K562 (cell line): ENCODE measurements at regions of chr7 and their contacts with region 1.

Region 1: GRCh38 chr7:8436965-8437364 is 3.6 kb downstream of the NXPH1 start:
- DNase-seq: peak; percentile 68 to 75 (median 72)
- ATAC-seq: peak; percentile 84
- H3K4me3 ChIP-seq: no peak overlapping the region
- H3K27ac ChIP-seq: no peak overlapping the region
- H3K4me1 ChIP-seq: peaks cover 0 to 21% of the 10 kb centered on the region in 2 experiments; a peak in 2 of 5 replicates
- H3K27me3 ChIP-seq: peaks cover 29 to 53% of the 10 kb centered on the region in 2 experiments
- CTCF ChIP-seq: peak; percentile 85 to 91 (median 88)
- EP300 ChIP-seq: no peak
- POLR2A ChIP-seq: no peak
- RAD21 ChIP-seq: peak; percentile 65 to 88

Region 2: DNA sequence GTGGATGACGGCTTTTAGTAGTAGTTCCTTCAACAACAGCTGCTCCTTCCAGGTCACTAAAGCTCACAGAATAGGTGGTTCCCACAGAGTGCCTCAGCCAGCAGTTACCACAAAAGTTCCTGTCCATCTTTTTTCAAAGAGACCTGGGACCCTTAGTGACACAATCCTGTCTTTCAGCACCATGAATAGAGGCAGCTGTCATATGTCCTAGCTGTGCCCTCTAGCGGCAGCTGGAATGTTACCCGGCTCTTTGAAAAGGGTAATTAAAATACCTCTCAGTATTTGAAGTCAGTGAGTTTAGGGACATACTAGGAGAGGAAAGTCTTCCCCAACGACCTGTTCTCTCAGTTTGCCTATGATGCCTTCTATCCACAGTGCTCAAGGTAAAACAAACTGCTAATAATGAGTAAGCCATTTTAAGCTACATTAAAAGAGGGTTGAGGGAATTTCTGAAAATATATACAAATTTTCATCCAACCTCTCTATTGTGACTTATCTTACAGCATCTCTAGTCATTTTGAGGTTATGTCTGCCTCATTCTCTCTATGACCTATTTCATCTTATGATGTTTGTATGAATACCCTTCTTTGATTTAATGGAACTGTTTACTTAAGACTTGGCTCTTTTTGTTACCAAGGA is 287.2 kb after region 1 on chr7:
- CTCF ChIA-PET with region 1: no interaction called
- POLR2A ChIA-PET with region 1: no interaction called
- in situ Hi-C with region 1: no loop called
- intact Hi-C with region 1: loop called (anchors 5 kb)
- DNase-seq: peak; percentile 26 to 74 (median 52)
- ATAC-seq: peak; percentile 99
- H3K4me3 ChIP-seq: no peak overlapping the region
- H3K27ac ChIP-seq: no peak overlapping the region
- H3K4me1 ChIP-seq: no peaks in the 10 kb centered on the region
- H3K27me3 ChIP-seq: no peaks in the 10 kb centered on the region; a peak in 1 of 5 replicates
- CTCF ChIP-seq: peak; percentile 76 to 79 (median 79)
- EP300 ChIP-seq: no peak
- POLR2A ChIP-seq: no peak
- RAD21 ChIP-seq: peak; percentile 49 to 70; a peak in 3 of 4 replicates

Region 3: DNA sequence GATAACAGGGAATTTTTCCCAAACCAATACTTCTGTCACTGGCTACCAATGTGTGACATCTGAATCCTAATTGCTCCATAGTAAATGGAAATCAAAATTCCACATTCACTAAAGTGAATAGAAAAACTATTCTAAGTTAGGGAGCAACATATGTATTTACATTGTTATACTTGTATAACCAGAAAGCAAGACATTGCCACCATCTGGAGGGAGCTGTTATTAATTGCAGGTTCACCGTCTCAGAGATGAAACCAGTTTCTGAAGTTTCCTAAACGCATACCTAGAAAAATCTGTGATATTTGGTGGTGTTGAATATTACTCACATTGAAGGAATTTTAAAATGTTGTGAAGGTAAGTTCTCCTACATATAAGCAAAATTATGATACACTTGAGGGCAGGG is 386.5 kb after region 1 on chr7:
- CTCF ChIA-PET with region 1: interaction called, 7 read pairs
- POLR2A ChIA-PET with region 1: no interaction called
- in situ Hi-C with region 1: no loop called
- intact Hi-C with region 1: loop called (anchors 2 kb)
- DNase-seq: no peak
- ATAC-seq: no peak
- H3K4me3 ChIP-seq: no peak overlapping the region
- H3K27ac ChIP-seq: no peak overlapping the region
- H3K4me1 ChIP-seq: no peaks in the 10 kb centered on the region; a peak in 1 of 5 replicates
- H3K27me3 ChIP-seq: no peaks in the 10 kb centered on the region
- CTCF ChIP-seq: peak in 1 of 3 experiments; percentile 29; a peak in 2 of 6 replicates
- EP300 ChIP-seq: no peak
- POLR2A ChIP-seq: no peak
- RAD21 ChIP-seq: peak in 1 of 2 experiments; percentile 33; a peak in 2 of 4 replicates

Region 4: DNA sequence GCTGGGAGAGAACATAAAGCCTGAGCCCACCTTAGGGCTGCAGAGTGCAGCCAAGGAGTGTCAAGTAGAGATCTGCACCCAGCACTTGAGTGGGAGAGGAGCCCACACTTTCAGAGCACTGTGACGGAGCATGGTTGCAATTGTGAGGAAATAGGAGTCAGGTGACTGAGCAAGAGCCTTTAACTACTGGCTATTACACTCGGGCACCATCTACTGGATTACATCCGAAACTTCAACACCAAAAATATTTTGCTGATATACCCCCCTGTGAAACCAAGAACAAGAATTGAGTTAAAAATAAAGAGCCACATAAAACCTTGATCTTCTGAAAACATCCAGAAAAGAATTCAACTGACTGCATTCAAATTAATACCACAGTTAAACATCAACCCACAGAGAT is 654.3 kb after region 1 on chr7:
- CTCF ChIA-PET with region 1: interaction called, 3 read pairs
- POLR2A ChIA-PET with region 1: no interaction called
- in situ Hi-C with region 1: no loop called
- intact Hi-C with region 1: loop called (anchors 5 kb)
- DNase-seq: peak in 2 of 4 experiments; percentile 9 to 14
- ATAC-seq: peak; percentile 48; the same call in 2 of the 3 replicates
- H3K4me3 ChIP-seq: no peak overlapping the region
- H3K27ac ChIP-seq: no peak overlapping the region
- H3K4me1 ChIP-seq: no peaks in the 10 kb centered on the region
- H3K27me3 ChIP-seq: no peaks in the 10 kb centered on the region
- CTCF ChIP-seq: peak; percentile 16 to 43 (median 28); a peak in 3 of 6 replicates
- EP300 ChIP-seq: no peak
- POLR2A ChIP-seq: no peak
- RAD21 ChIP-seq: peak; percentile 17 to 55; a peak in 2 of 4 replicates